Right ventricle myocardium inferior (tissue), 1 donor: ENCODE measurements at regions of chr1 and their contacts with region 1.

Region 1: GRCh38 chr1:167066333-167067122 is 23.6 kb downstream of the GPA33 start:
- DNase-seq: peak; percentile 86
- ATAC-seq: peak; percentile 84

Region 2: DNA sequence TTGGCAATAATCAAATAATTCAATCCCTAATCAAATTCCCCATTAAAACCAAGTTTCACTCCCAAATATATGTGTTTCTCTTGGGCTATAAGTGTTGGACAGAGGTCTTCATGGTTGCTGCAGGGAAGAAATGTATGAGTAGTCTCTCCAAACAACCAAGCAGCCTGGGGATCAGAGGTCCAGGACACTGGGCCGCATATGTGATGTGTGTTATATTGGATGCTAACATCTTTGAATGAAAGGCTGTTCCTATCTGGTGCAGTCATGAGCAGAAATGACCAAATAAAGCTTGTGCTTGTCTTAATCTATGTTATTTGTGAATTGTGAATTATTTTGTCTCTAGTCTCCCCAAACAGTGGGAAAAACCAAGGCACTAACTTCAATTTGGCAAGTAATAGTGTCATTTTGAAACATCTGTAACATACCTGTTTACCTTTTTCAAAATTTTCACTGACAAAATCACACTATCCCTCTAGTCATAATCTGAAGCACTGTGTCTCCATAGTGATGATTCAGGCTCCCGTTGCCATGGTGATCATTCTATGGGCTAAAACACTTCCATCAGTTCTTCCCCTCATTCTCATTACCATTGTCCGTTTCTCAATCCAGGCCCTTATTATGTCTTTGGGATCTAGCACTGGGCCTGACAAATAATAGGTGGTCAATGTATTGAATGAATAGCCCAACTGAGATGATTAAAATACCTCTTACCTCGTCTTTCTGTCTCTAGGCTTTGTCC is 178.0 kb before region 1 on chr1:
- intact Hi-C with region 1: no loop called
- DNase-seq: no peak
- ATAC-seq: no peak

Region 3: GRCh38 chr1:166975361-166976129 is 91.0 kb before region 1 on chr1 and contains the start of gene ILDR2:
- intact Hi-C with region 1: no loop called
- DNase-seq: peak; percentile 73
- ATAC-seq: peak; percentile 82
- total RNA-seq, gene ILDR2: 1.8 TPM

Region 4: GRCh38 chr1:167052389-167052788 is 14.1 kb before region 1 on chr1:
- intact Hi-C with region 1: no loop called
- DNase-seq: no peak
- ATAC-seq: peak; percentile 27

Region 5: GRCh38 chr1:167121375-167122120 is 55.0 kb after region 1 on chr1:
- intact Hi-C with region 1: loop called (anchors 5 kb)
- DNase-seq: peak; percentile 73
- ATAC-seq: no peak

Region 6: GRCh38 chr1:167220537-167221125 is 154.1 kb after region 1 on chr1 and contains the start of gene POU2F1:
- intact Hi-C with region 1: loop called (anchors 1 kb)
- DNase-seq: peak; percentile 100
- ATAC-seq: peak; percentile 96
- total RNA-seq, gene POU2F1: 7.5 TPM

Region 7: DNA sequence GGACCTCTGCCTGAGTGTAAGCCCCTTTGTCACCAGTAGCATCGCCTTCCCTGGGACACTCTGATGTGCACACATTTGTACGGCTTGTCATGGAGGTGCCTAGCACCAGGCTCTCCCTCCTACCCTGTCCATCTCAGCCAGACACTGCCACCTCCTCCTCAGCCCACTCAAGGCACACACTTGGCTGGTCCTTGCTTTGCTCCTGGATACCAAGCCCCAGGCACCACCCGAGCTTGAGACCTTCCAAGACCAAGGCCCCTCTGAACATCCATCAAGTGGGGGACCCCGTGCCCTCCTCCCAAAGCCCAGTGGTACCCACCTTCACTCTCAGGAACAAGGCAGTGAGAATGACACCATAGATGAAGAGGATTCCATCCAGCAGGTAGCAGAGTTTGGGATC is 373.8 kb after region 1 on chr1:
- intact Hi-C with region 1: loop called (anchors 2 kb)
- DNase-seq: no peak
- ATAC-seq: no peak